Mucosa of descending colon (tissue), 3 donors: ENCODE measurements at regions of chr17 and their contacts with region 1.

Region 1: GRCh38 chr17:145671-146541 is 8.5 kb downstream of the SCGB1C2 start:
- DNase-seq: peak in 2 of 3 donors; percentile 21 to 29
- ATAC-seq: no peak
- H3K4me3 ChIP-seq: no peak overlapping the region
- H3K4me1 ChIP-seq: no peaks in the 10 kb centered on the region
- CTCF ChIP-seq: no peak

Region 2: DNA sequence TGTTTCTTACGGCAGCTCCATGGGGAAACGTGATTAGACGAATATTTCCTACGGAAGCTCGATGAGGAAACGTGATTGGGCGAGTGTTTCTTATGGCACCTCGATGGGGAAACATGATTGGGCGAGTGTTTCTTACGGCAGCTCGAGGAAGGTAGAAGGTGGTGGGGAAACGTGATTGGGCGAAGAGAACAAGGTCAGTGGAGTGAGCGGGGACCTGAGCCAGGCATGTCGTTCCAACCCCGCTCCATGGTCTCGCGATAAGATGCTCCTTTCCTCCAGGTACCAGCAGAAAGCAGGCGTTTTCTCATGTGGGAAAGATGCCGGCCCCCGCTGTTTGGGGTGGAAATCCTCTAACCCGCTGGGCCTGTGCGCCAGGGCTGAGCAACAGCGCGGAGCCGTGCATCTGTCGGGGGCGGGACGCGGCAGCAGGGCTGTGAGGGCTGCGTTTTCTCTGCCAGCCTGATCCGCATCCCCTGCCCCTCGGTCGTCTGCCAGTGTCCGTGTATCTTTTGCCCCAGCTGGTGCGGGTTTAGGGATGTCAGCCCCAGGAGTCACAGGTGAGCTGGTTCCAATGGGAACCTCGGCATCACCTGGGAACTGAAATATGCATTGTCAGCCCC is 61.1 kb after region 1 on chr17:
- intact Hi-C with region 1: no loop called
- DNase-seq: no peak
- ATAC-seq: no peak
- H3K4me3 ChIP-seq: no peak overlapping the region
- H3K4me1 ChIP-seq: no peaks in the 10 kb centered on the region
- CTCF ChIP-seq: no peak

Region 3: DNA sequence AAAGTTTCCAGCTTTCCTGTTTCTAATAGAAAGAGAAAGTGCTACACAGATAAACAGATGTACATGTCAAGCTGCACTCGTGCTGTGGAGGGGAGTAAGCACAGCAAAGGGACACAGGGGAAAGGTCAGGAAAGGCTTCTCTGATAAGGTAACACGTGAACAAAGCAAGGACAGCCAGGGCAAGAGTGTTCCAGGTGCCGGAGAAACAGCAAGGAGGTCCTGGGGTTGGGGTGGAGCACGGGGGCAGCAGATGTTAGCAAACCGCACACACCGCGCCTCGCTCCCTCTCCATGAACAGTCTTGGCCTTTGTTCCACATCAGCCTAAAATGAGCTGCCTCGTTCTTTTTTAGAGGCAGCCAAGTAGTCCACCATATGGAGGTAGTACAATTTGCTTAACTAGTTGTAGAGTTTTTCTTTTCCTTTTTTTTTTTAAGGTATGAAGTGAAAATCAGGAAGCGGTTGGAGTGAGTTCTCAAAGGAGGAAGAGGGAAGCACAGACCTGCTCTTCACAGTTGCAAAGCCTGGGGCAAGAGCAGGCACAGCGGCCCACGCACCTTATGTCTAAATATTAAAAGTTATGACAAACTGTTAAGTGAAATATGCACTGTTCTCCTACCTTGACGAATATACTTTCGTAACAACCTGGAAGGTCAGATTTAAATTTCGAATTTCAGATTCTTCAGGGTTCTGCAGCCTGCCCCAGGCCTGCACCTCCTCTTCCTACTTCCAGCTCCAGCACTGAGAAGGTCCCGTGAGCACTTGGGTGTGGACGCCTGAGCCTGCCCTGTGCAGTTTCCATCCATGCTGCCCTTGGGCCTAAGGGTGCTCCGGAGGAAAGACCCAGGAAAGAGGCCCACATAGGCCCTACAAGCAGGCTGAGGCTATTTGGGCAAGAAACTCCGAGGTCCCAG is 248.2 kb after region 1 on chr17:
- intact Hi-C with region 1: loop called in 1 of 2 experiments (anchors 5 kb)
- DNase-seq: no peak
- ATAC-seq: peak; percentile 44
- H3K4me3 ChIP-seq: no peak overlapping the region
- H3K4me1 ChIP-seq: no peaks in the 10 kb centered on the region
- CTCF ChIP-seq: no peak